CD4-positive, alpha-beta memory T cell (primary cell): ENCODE measurements at regions of chr18 and their contacts with region 1.

Region 1: GRCh38 chr18:62982600-62983251 is 267.4 kb downstream of the PHLPP1 start:
- DNase-seq: peak in 4 of 5 donors; percentile 36 to 51 (median 48)
- H3K4me3 ChIP-seq: no peak overlapping the region
- H3K4me3 Mint-ChIP-seq: peak overlapping the region in 5 of 8 donors; percentile 51 to 78 (median 69)
- H3K27ac ChIP-seq: no peak overlapping the region
- H3K27ac Mint-ChIP-seq: peak overlapping the region in 1 of 7 donors; percentile 18
- H3K4me1 ChIP-seq: peaks cover 5% of the 10 kb centered on the region
- H3K4me1 Mint-ChIP-seq: peaks cover 0 to 8% (median 6%) of the 10 kb centered on the region in 4 donors
- H3K27me3 ChIP-seq: no peaks in the 10 kb centered on the region
- H3K27me3 Mint-ChIP-seq: no peaks in the 10 kb centered on the region

Region 2: DNA sequence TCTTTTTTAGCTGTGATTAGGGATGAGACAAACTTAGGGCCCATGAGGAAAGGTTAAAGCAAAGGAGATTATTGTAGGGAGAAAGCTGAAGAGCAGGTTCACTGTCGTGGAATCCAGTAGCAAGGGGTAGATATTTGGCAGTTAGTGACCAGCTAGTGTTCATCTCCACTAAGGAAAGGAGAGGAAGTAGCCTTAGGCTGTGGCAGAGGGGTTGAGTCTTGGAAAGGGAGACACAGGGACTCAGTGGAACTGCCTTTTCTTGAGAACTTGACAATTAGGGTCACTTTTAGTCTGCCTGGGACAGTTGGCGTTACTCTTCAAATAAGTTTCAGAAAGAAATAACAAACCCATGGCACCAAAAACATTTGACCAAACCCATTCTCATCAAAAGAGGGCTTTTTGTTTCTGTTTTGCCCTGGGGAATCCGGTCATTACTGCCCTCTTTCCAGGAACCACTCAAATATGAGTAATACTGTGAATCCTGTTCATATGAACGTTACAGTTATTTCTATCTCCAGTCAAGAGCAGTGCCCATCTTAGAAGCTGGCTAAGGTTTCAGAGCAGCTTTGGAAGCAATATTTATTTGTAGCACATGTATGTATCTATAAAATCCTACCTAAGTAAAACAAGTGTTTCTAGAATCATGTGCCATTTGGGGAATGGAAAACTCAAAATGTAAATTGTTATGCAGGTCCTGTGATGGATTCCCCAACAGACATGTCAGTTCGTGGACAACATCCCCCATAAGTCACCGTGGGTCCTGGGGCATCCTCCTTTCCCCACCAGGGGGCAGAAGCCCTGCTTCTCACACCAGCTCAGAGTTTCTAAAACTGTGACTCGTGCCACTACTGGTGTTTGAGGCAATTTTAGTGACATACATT is 344.7 kb before region 1 on chr18:
- CTCF ChIA-PET with region 1: interaction called, 31 read pairs
- POLR2A ChIA-PET with region 1: no interaction called
- intact Hi-C with region 1: no loop called
- DNase-seq: peak; percentile 32 to 46 (median 36)
- H3K4me3 ChIP-seq: no peak overlapping the region
- H3K4me3 Mint-ChIP-seq: no peak overlapping the region
- H3K27ac ChIP-seq: no peak overlapping the region
- H3K27ac Mint-ChIP-seq: no peak overlapping the region
- H3K4me1 ChIP-seq: no peaks in the 10 kb centered on the region
- H3K4me1 Mint-ChIP-seq: peaks cover 0 to 3% (median 0%) of the 10 kb centered on the region in 4 donors
- H3K27me3 ChIP-seq: peaks cover 3% of the 10 kb centered on the region
- H3K27me3 Mint-ChIP-seq: peaks cover 13 to 28% of the 10 kb centered on the region in 2 donors

Region 3: GRCh38 chr18:62784966-62785413 is 197.7 kb before region 1 on chr18:
- CTCF ChIA-PET with region 1: no interaction called
- POLR2A ChIA-PET with region 1: no interaction called
- intact Hi-C with region 1: no loop called
- DNase-seq: no peak
- H3K4me3 ChIP-seq: no peak overlapping the region
- H3K4me3 Mint-ChIP-seq: peak overlapping the region in 5 of 8 donors; percentile 54 to 83 (median 67)
- H3K27ac ChIP-seq: no peak overlapping the region
- H3K27ac Mint-ChIP-seq: peak overlapping the region in 2 of 7 donors; percentile 16 to 24
- H3K4me1 ChIP-seq: peaks cover 16% of the 10 kb centered on the region
- H3K4me1 Mint-ChIP-seq: peaks cover 22 to 31% (median 23%) of the 10 kb centered on the region in 4 donors
- H3K27me3 ChIP-seq: no peaks in the 10 kb centered on the region
- H3K27me3 Mint-ChIP-seq: no peaks in the 10 kb centered on the region